ENCODE measurements at regions of chr1 and their contacts with region 1.

Region 1: DNA sequence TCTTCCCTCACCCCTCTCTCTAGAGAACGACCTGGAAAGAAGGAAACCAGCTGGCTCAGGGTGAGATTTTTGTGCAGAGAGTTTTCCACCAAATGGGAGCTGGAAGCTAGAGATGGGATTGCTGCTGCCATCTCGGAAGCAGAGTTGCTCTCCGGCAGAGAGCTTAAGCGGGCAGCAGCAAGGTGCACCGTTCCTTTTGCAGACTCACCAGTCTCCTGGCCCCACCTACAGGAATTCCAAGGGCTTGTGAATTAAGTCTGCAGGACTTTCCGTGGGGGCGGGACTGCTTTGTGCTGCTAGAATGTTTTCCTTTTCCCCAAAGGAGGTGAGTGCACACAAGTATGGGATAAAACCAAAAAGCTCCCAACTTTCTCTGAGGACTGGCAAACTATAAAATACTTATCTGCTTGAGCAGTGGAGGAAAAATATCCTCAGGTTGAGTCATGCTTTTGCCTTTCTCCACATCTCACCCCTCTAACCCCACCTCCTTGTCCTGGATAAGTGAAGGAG is 29.1 kb upstream of the KIAA0040 start:
- DNase-seq: no peak
- ATAC-seq: no peak
- H3K4me3 Mint-ChIP-seq: no peak overlapping the region
- H3K27ac Mint-ChIP-seq: no peak overlapping the region
- H3K4me1 Mint-ChIP-seq: peaks cover 78% of the 10 kb centered on the region
- H3K27me3 Mint-ChIP-seq: no peaks in the 10 kb centered on the region
- CTCF ChIP-seq: no peak

Region 2: DNA sequence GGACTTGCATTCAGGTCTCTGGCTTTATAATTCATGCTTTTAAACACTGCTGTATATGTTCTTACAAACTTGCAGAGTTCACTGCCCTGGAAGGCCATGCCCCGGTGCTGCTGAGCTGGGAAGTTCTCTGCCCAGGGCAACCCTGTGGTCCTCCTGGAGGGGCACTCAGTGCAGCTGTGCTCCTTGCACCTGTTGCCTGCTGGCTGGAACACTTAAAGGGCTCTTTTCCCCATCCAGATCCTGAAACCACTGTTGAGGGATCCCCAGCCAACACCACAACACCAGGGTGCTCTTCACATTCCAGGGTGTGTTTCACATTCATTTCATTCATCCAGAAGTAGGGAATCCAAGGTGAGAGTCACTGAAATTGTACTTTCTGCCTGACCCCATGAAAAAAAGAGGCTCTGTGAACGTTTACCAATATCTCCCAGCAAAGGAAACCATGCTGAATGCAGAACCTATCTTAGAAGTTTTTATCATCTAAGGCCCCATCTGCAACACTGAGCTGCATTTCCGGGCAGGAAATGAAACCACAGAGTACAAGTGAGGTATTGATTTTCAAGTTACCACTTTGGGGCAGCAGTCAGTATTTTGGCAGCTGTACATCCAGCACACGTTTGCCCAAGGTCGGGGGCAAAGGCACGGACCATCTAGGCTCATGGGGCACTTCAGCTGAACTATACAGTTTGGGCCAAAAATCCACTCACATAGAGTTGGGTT is 12.8 kb before region 1 on chr1:
- CTCF ChIA-PET with region 1: interaction called, 4 read pairs
- POLR2A ChIA-PET with region 1: interaction called, 17 read pairs
- intact Hi-C with region 1: loop called (anchors 1 kb)
- DNase-seq: no peak
- ATAC-seq: peak; percentile 84
- H3K4me3 Mint-ChIP-seq: peak overlapping the region; percentile 80
- H3K27ac Mint-ChIP-seq: peak overlapping the region; percentile 98
- H3K4me1 Mint-ChIP-seq: peaks cover 64% of the 10 kb centered on the region
- H3K27me3 Mint-ChIP-seq: no peaks in the 10 kb centered on the region
- CTCF ChIP-seq: no peak

Region 3: DNA sequence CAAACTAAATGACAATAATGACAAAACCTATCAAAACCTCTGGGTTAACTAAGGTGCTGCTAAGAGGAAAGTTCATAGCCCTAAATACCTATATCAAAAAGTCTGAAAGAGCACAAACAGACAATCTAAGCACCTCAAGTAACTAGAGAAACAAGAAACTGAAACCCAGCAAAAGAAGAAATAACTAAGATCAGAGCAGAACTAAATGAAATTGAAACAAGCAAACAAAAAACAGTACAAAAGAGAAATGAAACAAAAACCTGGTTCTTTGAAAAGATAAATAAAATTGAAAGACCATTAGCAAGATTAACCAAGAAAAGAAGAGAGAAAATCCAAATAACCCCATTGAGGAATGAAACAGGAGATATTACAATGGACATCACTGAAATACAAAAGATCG is 15.7 kb after region 1 on chr1:
- CTCF ChIA-PET with region 1: no interaction called
- POLR2A ChIA-PET with region 1: no interaction called
- intact Hi-C with region 1: loop called (anchors 1 kb)
- DNase-seq: no peak
- ATAC-seq: peak; percentile 58
- H3K4me3 Mint-ChIP-seq: peak overlapping the region; percentile 63
- H3K27ac Mint-ChIP-seq: peak overlapping the region; percentile 83
- H3K4me1 Mint-ChIP-seq: peaks cover 67% of the 10 kb centered on the region
- H3K27me3 Mint-ChIP-seq: no peaks in the 10 kb centered on the region
- CTCF ChIP-seq: no peak

Region 4: GRCh38 chr1:175274368-175274767 is 52.6 kb after region 1 on chr1:
- CTCF ChIA-PET with region 1: no interaction called
- POLR2A ChIA-PET with region 1: no interaction called
- intact Hi-C with region 1: loop called (anchors 5 kb)
- DNase-seq: no peak
- ATAC-seq: peak; percentile 84
- H3K4me3 Mint-ChIP-seq: no peak overlapping the region
- H3K27ac Mint-ChIP-seq: no peak overlapping the region
- H3K4me1 Mint-ChIP-seq: peaks cover 6% of the 10 kb centered on the region
- H3K27me3 Mint-ChIP-seq: no peaks in the 10 kb centered on the region
- CTCF ChIP-seq: no peak